ENCODE measurements at regions of chr2 and their contacts with region 1.

Region 1: DNA sequence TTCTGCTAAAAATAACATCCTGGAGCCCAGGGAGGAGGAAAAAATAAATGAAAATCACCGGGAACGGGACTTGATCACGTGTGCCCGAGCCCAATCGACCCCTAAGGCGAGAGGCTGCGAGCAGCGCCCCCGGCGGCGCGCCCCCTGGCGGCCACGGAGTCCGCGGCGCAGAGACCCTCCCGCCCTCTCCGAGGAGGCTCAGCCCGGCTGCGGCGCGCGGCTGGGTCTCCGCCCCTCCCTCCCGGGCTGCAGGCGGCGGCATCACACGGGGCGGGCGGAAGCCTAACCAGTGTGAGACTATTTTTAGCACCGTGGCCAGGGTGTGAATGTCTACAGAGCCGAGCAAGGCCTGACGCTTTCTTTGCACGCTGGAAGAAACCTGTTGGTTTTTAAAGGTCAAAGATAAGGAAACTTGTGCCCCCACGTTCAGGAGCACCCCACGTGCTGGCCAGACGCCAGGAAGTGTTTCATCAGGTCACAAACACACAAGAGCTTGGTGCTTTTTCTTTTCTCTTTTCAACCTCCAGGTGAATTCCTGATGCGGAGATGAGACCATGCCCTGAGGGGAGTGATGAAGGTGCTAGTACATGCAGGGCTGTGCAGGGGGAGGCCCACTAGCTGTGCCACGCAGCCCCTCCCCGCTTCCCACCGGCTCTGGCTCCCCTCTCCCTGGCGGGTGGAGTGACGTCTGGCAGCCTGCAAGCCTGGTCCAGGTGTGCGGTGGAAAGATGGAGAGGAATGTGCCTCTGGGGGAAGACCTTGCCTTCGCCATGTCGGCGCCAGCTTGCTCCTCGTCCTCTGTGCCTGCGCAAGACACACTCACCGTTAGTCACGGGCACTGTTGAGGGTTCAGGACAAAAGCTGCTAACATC is 35.3 kb upstream of the DNMT3A start:
- DNase-seq: peak; percentile 92 to 95 (median 92)
- H3K4me3 ChIP-seq: peak overlapping the region in 1 of 2 donors; percentile 36
- H3K4me3 Mint-ChIP-seq: peak overlapping the region; percentile 48 to 85 (median 74)
- H3K27ac ChIP-seq: peak overlapping the region; percentile 57
- H3K27ac Mint-ChIP-seq: peak overlapping the region; percentile 90 to 96 (median 94)
- H3K4me1 ChIP-seq: peaks cover 38% of the 10 kb centered on the region
- H3K4me1 Mint-ChIP-seq: peaks cover 19 to 36% (median 23%) of the 10 kb centered on the region in 4 donors
- H3K27me3 ChIP-seq: no peaks in the 10 kb centered on the region
- H3K27me3 Mint-ChIP-seq: no peaks in the 10 kb centered on the region

Region 2: GRCh38 chr2:25252281-25253105 is 124.5 kb before region 1 on chr2:
- CTCF ChIA-PET with region 1: interaction called, 3 read pairs
- POLR2A ChIA-PET with region 1: no interaction called
- intact Hi-C with region 1: loop called (anchors 1 kb)
- DNase-seq: peak in 4 of 5 donors; percentile 45 to 72 (median 48)
- H3K4me3 ChIP-seq: peak overlapping the region in 1 of 2 donors; percentile 56
- H3K4me3 Mint-ChIP-seq: peak overlapping the region; percentile 73 to 86 (median 82)
- H3K27ac ChIP-seq: peak overlapping the region; percentile 59
- H3K27ac Mint-ChIP-seq: peak overlapping the region; percentile 57 to 91 (median 80)
- H3K4me1 ChIP-seq: peaks cover 19% of the 10 kb centered on the region
- H3K4me1 Mint-ChIP-seq: peaks cover 16 to 51% (median 32%) of the 10 kb centered on the region in 4 donors
- H3K27me3 ChIP-seq: no peaks in the 10 kb centered on the region
- H3K27me3 Mint-ChIP-seq: no peaks in the 10 kb centered on the region

Region 3: DNA sequence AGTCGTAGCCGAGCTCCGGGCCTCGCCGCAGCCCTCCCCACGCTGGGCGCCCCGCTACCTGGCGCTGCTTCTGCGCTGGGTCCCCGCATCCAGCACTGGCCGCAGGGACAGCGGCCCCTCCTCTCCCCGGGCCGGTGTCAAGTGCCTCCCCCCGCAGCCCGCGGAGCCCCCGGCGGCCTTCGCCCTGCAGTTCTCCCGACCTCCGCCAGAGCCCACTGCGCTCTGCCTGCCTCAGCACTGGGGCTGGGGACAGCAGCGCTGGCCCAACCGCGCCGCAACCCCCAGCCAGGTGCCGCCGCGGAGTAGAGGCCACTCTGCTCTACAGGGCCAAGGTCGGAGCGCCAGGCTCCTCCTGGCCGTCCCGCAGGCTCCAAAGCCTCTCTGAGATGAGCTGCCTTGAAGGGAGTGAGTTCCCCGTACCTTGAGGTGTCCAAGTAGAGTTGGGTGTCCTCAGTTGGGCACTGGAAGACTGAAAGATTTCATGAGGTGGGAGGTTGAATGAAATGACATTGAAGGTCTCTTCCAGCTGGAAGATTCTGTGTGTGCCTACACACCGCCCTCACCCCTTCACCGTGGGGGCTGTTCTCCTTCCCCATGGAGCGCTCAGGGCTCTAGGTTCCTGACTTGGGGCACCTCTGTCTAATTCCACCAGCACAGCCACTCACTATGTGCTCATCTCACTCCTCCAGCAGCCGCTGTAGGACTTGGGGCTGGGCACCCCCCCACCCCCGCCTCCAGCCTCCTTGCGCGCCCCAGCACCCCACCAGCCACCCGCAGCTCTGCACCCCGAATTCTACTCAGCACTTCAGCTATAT is 34.4 kb before region 1 on chr2:
- CTCF ChIA-PET with region 1: interaction called, 4 read pairs
- POLR2A ChIA-PET with region 1: interaction called, 4 read pairs
- intact Hi-C with region 1: loop called (anchors 1 kb)
- DNase-seq: peak; percentile 78 to 83 (median 81)
- H3K4me3 ChIP-seq: peak overlapping the region in 1 of 2 donors; percentile 52
- H3K4me3 Mint-ChIP-seq: peak overlapping the region; percentile 66 to 89 (median 82)
- H3K27ac ChIP-seq: no peak overlapping the region
- H3K27ac Mint-ChIP-seq: peak overlapping the region in 3 of 7 donors; percentile 74 to 84 (median 74)
- H3K4me1 ChIP-seq: peaks cover 34% of the 10 kb centered on the region
- H3K4me1 Mint-ChIP-seq: peaks cover 10 to 35% (median 23%) of the 10 kb centered on the region in 4 donors
- H3K27me3 ChIP-seq: no peaks in the 10 kb centered on the region
- H3K27me3 Mint-ChIP-seq: no peaks in the 10 kb centered on the region

Region 4: GRCh38 chr2:25386971-25387875 is 10.2 kb after region 1 on chr2:
- CTCF ChIA-PET with region 1: interaction called, 15 read pairs
- POLR2A ChIA-PET with region 1: interaction called, 4 read pairs
- intact Hi-C with region 1: no loop called
- DNase-seq: no peak
- H3K4me3 ChIP-seq: no peak overlapping the region
- H3K4me3 Mint-ChIP-seq: no peak overlapping the region
- H3K27ac ChIP-seq: no peak overlapping the region
- H3K27ac Mint-ChIP-seq: peak overlapping the region in 1 of 7 donors; percentile 68
- H3K4me1 ChIP-seq: no peaks in the 10 kb centered on the region
- H3K4me1 Mint-ChIP-seq: peaks cover 0 to 3% (median under 1%) of the 10 kb centered on the region in 4 donors
- H3K27me3 ChIP-seq: no peaks in the 10 kb centered on the region
- H3K27me3 Mint-ChIP-seq: no peaks in the 10 kb centered on the region